ENCODE measurements at regions of chr6 and their contacts with region 1.

Region 1: GRCh38 chr6:108492131-108492766 is 68.5 kb upstream of the FOXO3 start:
- DNase-seq: no peak
- H3K4me3 Mint-ChIP-seq: no peak overlapping the region
- H3K27ac Mint-ChIP-seq: no peak overlapping the region
- H3K4me1 Mint-ChIP-seq: no peaks in the 10 kb centered on the region
- H3K27me3 Mint-ChIP-seq: peaks cover 3% of the 10 kb centered on the region

Region 2: DNA sequence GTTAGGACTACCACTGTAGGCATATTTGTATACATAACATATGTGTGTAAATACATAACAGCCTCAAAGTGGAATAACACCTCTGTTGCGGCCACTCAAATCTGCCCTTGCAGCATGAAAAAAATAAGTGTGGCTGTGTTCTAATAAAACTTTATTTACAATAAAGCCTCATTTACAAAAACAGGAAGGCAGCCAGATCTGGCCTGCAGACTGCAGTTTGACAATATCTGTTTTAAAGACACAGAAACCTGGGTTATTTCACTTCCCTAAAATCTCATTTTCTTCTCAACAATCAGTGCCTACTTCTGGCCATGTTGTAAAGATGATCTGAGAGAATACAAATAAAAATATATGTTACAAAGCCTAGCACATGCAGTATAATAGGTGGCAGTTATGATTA is 614.3 kb before region 1 on chr6:
- CTCF ChIA-PET with region 1: no interaction called
- POLR2A ChIA-PET with region 1: no interaction called
- DNase-seq: no peak
- H3K4me3 Mint-ChIP-seq: no peak overlapping the region
- H3K27ac Mint-ChIP-seq: no peak overlapping the region
- H3K4me1 Mint-ChIP-seq: no peaks in the 10 kb centered on the region
- H3K27me3 Mint-ChIP-seq: no peaks in the 10 kb centered on the region

Region 3: DNA sequence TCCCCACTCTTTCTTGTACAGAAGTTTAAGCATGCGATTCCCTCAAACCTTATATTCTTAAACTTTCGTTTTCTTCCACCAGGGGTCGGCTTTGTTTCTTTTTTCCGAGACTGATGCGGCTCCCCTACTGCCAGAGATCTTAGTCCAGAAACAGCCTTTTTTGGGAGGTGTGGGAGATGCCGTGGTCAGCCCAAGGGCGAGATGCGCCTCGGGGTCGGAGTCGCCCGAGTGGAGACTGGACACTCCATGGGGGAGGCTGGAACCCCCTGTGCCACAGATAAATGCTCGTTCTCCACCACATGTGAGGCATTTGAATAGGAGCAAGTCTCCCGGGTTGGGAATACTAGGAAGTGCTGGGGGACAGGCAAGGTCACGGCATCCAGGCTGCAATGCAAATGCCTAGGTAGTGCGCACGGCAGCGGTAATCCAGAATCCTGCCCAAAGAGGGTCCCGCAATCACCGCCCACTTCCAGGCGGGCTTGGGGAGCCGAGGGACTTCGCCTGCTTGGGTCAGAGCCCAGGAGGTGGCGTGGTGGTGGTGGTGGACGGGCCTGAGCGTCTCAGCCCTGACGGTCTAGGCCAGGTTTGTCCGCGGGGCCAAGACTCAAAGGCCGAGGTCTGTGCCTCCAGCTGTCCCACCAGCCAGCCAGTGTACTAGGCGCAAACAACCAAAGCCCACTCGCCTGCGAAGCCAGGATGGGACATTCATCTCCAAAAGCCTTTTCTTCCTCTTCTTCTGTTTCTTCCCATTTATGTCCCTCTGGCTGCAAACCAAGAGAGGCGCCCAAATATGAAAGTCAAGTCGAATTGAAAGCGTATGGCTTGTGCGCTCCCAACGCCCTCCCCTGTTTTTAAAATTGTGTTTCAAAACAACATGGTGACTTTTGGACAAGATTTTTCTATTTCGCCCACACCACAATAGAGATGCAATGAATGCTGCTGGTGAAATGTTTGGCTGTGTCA is 378.4 kb before region 1 on chr6:
- CTCF ChIA-PET with region 1: interaction called, 26 read pairs
- POLR2A ChIA-PET with region 1: interaction called, 3 read pairs
- DNase-seq: peak; percentile 23
- H3K4me3 Mint-ChIP-seq: peak overlapping the region; percentile 44
- H3K27ac Mint-ChIP-seq: no peak overlapping the region
- H3K4me1 Mint-ChIP-seq: peaks cover 41% of the 10 kb centered on the region
- H3K27me3 Mint-ChIP-seq: peaks cover 76% of the 10 kb centered on the region

Region 4: DNA sequence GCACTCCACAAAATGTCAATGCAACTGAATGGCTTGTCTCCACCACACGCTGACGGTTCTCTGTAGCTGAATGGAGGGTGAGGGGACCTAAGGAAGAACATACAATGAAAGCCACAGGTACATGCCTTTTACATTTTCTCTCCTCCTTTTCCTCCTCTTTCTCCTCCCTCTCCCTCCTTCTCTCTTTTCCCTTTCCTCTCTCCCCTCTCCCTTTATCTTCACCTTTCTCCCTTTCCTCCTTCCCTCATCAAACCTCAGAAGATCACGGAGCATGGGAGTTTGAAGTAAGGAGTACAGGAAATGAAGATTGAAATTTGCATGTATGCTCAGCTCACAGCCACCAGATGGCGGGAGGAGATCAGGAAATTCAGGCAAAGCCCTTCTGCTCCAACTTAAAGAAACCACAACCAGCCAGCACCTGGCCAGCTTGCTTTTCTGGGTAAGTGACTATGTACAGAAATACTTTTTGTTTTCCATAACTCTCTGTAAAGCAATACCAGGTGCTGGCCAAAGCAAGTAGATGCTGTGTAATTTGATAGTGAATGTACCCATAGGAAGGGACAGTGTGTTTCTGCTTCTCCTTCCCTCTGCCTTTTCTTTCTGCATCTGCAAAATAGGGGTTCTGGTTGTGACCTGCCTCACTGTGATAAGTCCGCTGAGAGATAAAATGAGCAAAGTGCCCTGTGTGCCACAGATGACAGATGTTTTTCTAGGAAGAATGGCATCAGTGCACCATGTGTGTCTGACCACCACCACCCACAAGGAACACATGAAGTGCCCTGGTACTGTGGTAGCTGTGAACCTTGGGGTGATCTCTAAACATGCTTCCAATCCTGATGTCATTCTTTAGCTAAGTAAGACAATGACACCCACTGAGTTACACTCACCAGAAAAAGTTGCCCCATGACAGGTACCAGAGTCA is 49.9 kb after region 1 on chr6:
- CTCF ChIA-PET with region 1: no interaction called
- POLR2A ChIA-PET with region 1: no interaction called
- DNase-seq: peak; percentile 78
- H3K4me3 Mint-ChIP-seq: peak overlapping the region; percentile 40
- H3K27ac Mint-ChIP-seq: no peak overlapping the region
- H3K4me1 Mint-ChIP-seq: peaks cover 23% of the 10 kb centered on the region
- H3K27me3 Mint-ChIP-seq: peaks cover 18% of the 10 kb centered on the region

Region 5: DNA sequence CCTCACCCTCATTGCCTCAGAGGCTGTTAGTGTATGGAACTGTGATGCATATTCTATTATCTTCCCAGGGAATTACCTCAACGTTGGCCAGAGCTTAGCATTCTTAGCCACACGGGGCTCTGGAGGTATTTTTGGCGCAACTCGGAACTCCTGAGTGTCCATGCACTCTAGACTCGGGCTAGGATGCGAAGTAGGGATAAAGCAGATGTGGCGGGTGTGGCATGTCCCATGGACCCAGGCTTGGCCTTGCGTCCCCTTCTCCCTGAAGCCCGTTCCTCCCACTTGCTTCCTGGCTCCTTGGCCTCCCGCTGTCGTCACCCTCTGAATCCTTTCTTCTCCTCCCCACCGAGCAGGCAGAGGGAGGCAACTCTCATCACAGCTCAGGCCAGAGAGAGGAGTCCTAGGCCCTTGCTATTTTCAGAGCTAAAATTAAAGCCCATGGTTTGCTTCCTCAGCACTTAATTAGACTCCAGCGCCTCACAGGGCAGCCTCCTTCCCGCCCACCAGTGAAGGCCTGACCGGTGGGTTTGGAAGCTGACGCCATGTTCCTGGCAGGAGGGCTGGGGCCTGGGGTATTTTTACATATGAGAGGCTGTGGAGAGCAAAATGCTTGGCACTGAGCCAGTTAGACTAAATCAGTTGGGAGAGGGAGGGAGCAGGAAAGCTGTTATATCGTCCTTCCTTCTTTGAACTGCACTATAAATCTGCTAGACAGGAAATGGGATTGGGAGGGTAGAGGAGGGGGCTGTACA is 207.2 kb after region 1 on chr6:
- CTCF ChIA-PET with region 1: no interaction called
- POLR2A ChIA-PET with region 1: no interaction called
- DNase-seq: no peak
- H3K4me3 Mint-ChIP-seq: no peak overlapping the region
- H3K27ac Mint-ChIP-seq: no peak overlapping the region
- H3K4me1 Mint-ChIP-seq: peaks cover 7% of the 10 kb centered on the region
- H3K27me3 Mint-ChIP-seq: no peaks in the 10 kb centered on the region